ENCODE measurements at regions of chr15 and their contacts with region 1.

Region 1: GRCh38 chr15:42575188-42576039 is at the start of gene STARD9:
- DNase-seq: peak; percentile 98
- H3K4me3 Mint-ChIP-seq: peak within 1 kb of the TSS; percentile 89
- H3K27ac Mint-ChIP-seq: peak within 1 kb of the TSS; percentile 53
- H3K4me1 Mint-ChIP-seq: peaks cover 7% of the 10 kb centered on the region
- H3K27me3 Mint-ChIP-seq: no peaks in the 10 kb centered on the region
- CTCF ChIP-seq: no peak
- total RNA-seq, gene STARD9: 2.0 and 2.9 TPM in 2 replicates

Region 2: DNA sequence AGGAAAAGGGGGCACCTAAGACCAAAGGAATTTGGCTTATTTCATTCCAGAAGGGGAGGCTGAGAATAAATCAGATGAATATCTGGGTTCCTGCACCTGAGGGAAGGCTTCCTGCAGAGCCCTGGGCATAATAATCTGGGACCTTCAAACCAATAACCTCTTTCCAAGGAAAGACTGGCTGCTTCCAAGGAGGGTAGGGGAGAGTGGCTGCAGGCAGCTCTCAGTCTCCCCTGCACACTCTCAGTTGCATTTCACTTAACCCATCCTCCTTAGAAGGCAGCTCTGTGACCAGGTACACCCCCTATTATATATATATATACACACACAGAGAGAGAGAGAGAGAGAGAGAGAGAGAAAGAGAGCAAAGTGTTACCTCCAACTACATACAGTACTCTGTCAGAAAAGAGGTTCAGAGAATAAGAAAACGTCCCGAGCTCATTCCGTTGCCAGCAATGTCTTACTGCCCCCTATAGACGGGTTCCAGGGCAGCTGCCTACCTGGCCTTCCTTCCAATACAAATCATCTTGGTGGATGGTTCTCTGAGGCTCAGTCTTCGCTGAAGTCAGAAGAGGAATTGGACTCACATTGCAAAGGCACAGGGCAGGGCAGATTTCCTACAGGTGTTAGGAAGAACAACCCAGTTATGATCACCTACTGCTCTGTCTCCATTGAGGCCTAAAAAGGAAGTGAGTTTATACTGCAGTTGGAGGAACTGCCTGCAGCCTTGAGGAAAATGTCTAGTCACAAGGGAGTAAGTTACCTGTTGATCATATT is 190.0 kb before region 1 on chr15:
- CTCF ChIA-PET with region 1: no interaction called
- POLR2A ChIA-PET with region 1: no interaction called
- intact Hi-C with region 1: no loop called
- DNase-seq: peak; percentile 60
- H3K4me3 Mint-ChIP-seq: no peak overlapping the region
- H3K27ac Mint-ChIP-seq: no peak overlapping the region
- H3K4me1 Mint-ChIP-seq: no peaks in the 10 kb centered on the region
- H3K27me3 Mint-ChIP-seq: no peaks in the 10 kb centered on the region
- CTCF ChIP-seq: peak; percentile 43

Region 3: GRCh38 chr15:42553554-42553953 is 21.9 kb before region 1 on chr15:
- CTCF ChIA-PET with region 1: interaction called, 4 read pairs
- POLR2A ChIA-PET with region 1: interaction called, 27 read pairs
- intact Hi-C with region 1: no loop called
- DNase-seq: no peak
- H3K4me3 Mint-ChIP-seq: no peak overlapping the region
- H3K27ac Mint-ChIP-seq: no peak overlapping the region
- H3K4me1 Mint-ChIP-seq: peaks cover 22% of the 10 kb centered on the region
- H3K27me3 Mint-ChIP-seq: no peaks in the 10 kb centered on the region
- CTCF ChIP-seq: no peak

Measured in MCF 10A (cell line).